Activated T-helper 2 cell treated with anti-CD3 and anti-CD28 coated beads, Interferon-gamma antibody, Interleukin-2, Interleukin-4, amounts not matched to agents 10 μg/mL and 5 μg/mL and 100 μg/mL, durations not matched to agents 14 hours and 24 hours and 36 hours (primary cell): ENCODE measurements at regions of chr3 and their contacts with region 1.

Region 1: DNA sequence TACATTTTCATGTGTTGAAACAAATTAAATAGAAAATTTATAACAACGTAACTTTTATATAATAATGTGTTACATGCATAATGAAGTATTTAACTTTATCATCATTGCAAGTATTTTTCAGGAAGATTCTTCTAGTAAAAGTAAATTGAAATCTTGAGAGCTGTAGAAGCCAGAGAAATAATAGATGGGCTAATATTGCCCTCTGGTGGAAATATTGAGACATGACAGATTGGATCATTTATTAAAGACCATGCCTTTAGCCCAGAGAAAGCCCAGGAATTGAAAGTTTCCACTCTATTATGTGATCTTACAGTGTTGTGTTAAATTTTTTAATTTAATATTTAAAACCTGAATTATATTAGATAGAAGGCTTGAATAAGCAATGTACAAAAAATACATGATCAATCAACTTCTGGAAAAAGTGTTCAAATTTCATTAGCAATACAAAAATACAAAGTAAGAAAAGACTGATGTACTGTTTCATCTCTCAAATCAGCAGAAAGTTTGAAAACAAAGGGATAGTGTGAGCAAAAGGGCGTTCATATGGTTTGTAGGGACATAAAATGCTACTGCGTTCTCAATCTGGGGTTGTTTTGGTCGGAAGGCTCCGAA is 52.7 kb upstream of the SPTSSB start:
- DNase-seq: no peak
- H3K4me3 Mint-ChIP-seq: no peak overlapping the region
- H3K27ac Mint-ChIP-seq: no peak overlapping the region
- H3K4me1 Mint-ChIP-seq: no peaks in the 10 kb centered on the region
- H3K27me3 Mint-ChIP-seq: peaks cover 4% of the 10 kb centered on the region

Region 2: DNA sequence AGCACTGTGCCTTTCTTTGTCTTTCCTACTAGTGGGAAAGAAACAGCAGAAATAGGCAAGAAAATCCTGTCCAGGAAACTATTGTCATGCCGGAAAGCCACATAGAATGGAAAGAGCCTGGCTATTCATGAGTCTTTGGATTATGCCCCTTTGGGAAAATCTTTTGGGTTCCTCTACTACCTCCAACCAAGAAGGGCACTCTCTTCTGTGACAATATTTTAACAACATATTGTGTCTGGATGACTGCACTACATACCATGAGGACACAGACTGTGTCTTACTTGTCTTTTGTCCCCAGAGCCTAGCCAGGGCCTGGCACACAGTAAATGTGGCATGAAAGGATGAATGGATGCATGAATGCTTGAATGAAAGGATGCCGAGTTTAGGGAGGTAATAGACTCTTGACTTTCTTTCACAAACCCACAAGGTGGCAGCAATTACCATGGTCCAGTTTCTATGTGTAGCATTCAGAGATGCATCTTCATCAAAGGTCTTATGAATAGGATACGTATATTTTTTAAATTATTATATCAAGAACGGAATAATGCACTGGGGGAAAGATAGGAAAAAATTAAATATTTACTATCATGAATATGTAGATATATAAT is 716.7 kb before region 1 on chr3:
- intact Hi-C with region 1: loop called (anchors 5 kb)
- DNase-seq: no peak
- H3K4me3 Mint-ChIP-seq: no peak overlapping the region
- H3K27ac Mint-ChIP-seq: no peak overlapping the region
- H3K4me1 Mint-ChIP-seq: no peaks in the 10 kb centered on the region
- H3K27me3 Mint-ChIP-seq: peaks cover 33% of the 10 kb centered on the region

Region 3: DNA sequence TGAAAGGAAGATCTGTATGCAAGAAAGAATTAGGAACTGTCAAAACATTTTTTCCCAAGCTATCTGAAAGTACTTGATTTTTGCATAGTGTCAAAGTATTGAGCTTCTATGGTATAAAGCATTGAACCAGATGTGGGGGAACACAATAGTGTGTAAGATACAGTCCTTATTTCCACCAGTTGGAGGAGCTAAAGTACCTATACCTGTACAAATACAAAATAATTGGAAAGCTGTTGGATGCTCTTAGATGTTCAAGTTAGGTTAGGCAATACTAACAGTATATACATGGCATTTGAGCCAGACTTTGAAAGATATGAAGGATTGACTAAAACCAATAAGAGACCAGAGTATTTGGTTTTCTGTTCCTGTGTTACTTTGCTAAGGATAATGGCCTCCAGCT is 467.2 kb before region 1 on chr3:
- intact Hi-C with region 1: loop called (anchors 10 kb)
- DNase-seq: no peak
- H3K4me3 Mint-ChIP-seq: no peak overlapping the region
- H3K27ac Mint-ChIP-seq: no peak overlapping the region
- H3K4me1 Mint-ChIP-seq: no peaks in the 10 kb centered on the region
- H3K27me3 Mint-ChIP-seq: peaks cover 4% of the 10 kb centered on the region

Region 4: GRCh38 chr3:161096771-161097355 is 327.2 kb before region 1 on chr3:
- intact Hi-C with region 1: loop called (anchors 5 kb)
- DNase-seq: no peak
- H3K4me3 Mint-ChIP-seq: no peak overlapping the region
- H3K27ac Mint-ChIP-seq: no peak overlapping the region
- H3K4me1 Mint-ChIP-seq: no peaks in the 10 kb centered on the region
- H3K27me3 Mint-ChIP-seq: peaks cover 9% of the 10 kb centered on the region

Region 5: DNA sequence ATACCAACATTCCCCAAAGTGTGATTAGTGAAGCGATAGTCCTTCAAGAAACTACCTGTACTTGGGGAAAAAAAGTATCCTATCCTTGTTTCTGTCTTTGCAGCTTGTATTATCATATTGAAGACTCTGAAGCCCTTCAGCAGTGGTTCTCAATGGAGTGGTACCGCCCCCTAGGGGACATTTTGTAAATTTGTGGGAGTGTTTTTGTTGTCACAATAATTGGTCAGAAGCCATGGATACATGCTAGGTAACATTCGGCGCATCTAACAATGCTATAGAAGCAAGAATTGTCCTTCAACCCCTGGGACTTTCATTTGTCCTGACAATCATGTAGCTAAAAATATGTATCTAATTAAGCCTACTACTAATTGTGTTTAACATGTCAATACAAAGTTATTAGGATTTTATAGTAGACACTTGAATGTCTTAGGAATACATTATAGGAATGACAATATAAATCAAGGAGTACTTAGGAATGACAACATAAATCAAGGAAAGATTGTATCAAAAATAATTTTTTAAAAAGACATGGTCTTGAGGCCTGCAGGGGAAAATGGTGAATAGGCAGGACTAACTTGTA is 149.2 kb before region 1 on chr3:
- intact Hi-C with region 1: loop called (anchors 1 kb)
- DNase-seq: peak; percentile 14
- H3K4me3 Mint-ChIP-seq: no peak overlapping the region
- H3K27ac Mint-ChIP-seq: no peak overlapping the region
- H3K4me1 Mint-ChIP-seq: no peaks in the 10 kb centered on the region
- H3K27me3 Mint-ChIP-seq: no peaks in the 10 kb centered on the region

Region 6: GRCh38 chr3:161409069-161409468 is 14.9 kb before region 1 on chr3:
- intact Hi-C with region 1: no loop called
- DNase-seq: no peak
- H3K4me3 Mint-ChIP-seq: no peak overlapping the region
- H3K27ac Mint-ChIP-seq: no peak overlapping the region
- H3K4me1 Mint-ChIP-seq: no peaks in the 10 kb centered on the region
- H3K27me3 Mint-ChIP-seq: peaks cover 23% of the 10 kb centered on the region